Activated CD4-positive, alpha-beta T cell treated with anti-CD3 and anti-CD28 coated beads, Interleukin-2, amount 10 ng/mL, durations not matched to agents 24 days and 14 days (primary cell): ENCODE measurements at regions of chr21 and their contacts with region 1.

Region 1: GRCh38 chr21:32727687-32728455 is at the start of gene SYNJ1:
- DNase-seq: peak; percentile 98
- H3K4me3 Mint-ChIP-seq: peak within 1 kb of the TSS; percentile 90
- H3K27ac Mint-ChIP-seq: peak within 1 kb of the TSS; percentile 93
- H3K4me1 Mint-ChIP-seq: peaks cover 30% of the 10 kb centered on the region
- H3K27me3 Mint-ChIP-seq: no peaks in the 10 kb centered on the region
- total RNA-seq, gene SYNJ1: 11.3 and 12.6 TPM in 2 replicates

Region 2: GRCh38 chr21:32392880-32393676 is 334.8 kb before region 1 on chr21 and contains the start of gene URB1:
- intact Hi-C with region 1: loop called (anchors 2 kb)
- DNase-seq: peak; percentile 99
- H3K4me3 Mint-ChIP-seq: peak within 1 kb of the TSS; percentile 93
- H3K27ac Mint-ChIP-seq: peak within 1 kb of the TSS; percentile 89
- H3K4me1 Mint-ChIP-seq: peaks cover 30% of the 10 kb centered on the region
- H3K27me3 Mint-ChIP-seq: peaks cover 8% of the 10 kb centered on the region
- total RNA-seq, gene URB1: 39.2 and 41.7 TPM in 2 replicates

Region 3: DNA sequence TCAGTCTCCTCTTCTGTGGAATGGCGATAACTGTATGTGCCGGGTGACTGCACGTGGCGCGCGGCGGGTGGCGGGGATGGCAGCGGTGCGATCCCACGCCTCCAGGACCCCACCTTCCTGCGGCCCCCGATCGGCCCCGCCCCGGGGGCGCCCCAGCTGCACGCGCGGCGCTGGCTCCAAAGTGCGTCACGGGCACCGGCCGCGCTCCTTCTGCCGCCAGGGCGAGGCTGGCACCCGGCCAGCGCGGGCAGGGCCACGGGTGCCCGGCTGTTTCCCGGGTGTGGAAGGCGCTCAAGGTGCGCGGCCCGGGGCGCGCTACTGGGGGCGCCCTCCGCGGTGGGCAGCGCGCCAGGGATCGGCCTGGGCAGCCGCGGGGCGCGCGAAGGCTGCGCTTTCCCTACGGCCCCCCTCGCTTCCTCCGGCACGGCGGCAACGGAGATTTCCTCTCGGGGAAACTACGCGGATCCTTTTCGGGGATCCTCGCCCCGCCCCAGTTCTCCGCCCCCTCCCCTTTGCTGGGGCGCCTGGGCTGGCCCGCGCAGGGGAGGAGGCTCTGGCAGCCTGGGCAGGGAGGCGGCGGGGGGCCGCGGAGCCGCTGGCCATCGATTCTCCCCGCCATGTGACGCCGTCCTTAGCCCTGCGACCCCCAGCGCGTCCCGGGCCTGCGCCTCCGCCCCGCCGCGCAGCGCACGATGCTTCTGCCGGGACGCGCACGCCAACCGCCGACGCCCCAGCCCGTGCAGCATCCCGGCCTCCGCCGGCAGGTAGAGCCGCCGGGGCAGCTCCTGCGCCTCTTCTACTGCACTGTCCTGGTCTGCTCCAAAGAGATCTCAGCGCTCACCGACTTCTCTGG is 315.5 kb before region 1 on chr21 and contains the start of gene EVA1C:
- intact Hi-C with region 1: loop called (anchors 5 kb)
- DNase-seq: peak; percentile 87
- H3K4me3 Mint-ChIP-seq: peak within 1 kb of the TSS; percentile 95
- H3K27ac Mint-ChIP-seq: peak within 1 kb of the TSS; percentile 94
- H3K4me1 Mint-ChIP-seq: peaks cover 16% of the 10 kb centered on the region
- H3K27me3 Mint-ChIP-seq: peaks cover 2% of the 10 kb centered on the region
- total RNA-seq, gene EVA1C: 6.0 and 8.2 TPM in 2 replicates

Region 4: GRCh38 chr21:32712043-32712442 is 15.8 kb before region 1 on chr21:
- intact Hi-C with region 1: loop called (anchors 2 kb)
- DNase-seq: peak; percentile 77
- H3K4me3 Mint-ChIP-seq: peak overlapping the region; percentile 24
- H3K27ac Mint-ChIP-seq: no peak overlapping the region
- H3K4me1 Mint-ChIP-seq: peaks cover 15% of the 10 kb centered on the region
- H3K27me3 Mint-ChIP-seq: no peaks in the 10 kb centered on the region

Region 5: GRCh38 chr21:32770871-32771523 is 43.1 kb after region 1 on chr21:
- intact Hi-C with region 1: loop called (anchors 1 kb)
- DNase-seq: peak; percentile 88
- H3K4me3 Mint-ChIP-seq: peak overlapping the region; percentile 99
- H3K27ac Mint-ChIP-seq: peak overlapping the region; percentile 92
- H3K4me1 Mint-ChIP-seq: peaks cover 46% of the 10 kb centered on the region
- H3K27me3 Mint-ChIP-seq: peaks cover 3% of the 10 kb centered on the region